Calu3 (cell line): ENCODE measurements at regions of chr5 and their contacts with region 1.

Region 1: GRCh38 chr5:65809817-65810531 is 88.0 kb downstream of the NLN start:
- DNase-seq: peak; percentile 64
- H3K4me3 Mint-ChIP-seq: no peak overlapping the region
- H3K27ac Mint-ChIP-seq: peak overlapping the region; percentile 85
- H3K4me1 Mint-ChIP-seq: peaks cover 64% of the 10 kb centered on the region
- H3K27me3 Mint-ChIP-seq: no peaks in the 10 kb centered on the region
- CTCF ChIP-seq: no peak

Region 2: DNA sequence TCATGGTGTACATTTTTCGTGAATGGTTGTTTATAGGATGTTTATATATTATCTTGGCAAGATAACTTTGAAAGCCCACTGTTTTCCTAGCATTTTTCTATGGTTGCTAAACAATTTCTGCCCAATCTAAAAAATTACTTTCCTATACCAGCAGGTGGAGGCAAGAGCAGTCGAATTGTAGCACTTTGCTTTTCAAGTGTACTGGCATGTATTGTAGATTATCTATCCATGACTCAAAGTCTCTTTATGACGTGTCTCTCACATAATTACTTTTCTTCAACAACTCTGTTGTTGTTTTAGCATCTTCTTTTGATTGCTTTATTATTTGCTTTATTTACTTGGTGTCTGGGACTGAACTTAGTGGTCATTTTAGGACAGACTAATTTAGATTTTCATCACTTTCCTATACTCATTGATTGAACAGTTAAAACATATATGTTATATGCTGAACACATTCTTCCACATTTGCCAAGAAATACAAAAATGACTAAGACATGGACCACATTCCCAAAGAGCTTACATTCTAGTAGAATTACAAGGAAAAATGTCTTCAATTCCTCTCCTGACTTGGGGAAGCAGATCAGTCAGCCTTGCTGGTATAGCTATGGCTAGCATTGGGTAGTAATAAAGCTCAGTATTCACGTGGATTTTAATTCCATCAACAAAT is 67.3 kb before region 1 on chr5:
- CTCF ChIA-PET with region 1: no interaction called
- intact Hi-C with region 1: loop called (anchors 5 kb)
- DNase-seq: peak; percentile 22
- H3K4me3 Mint-ChIP-seq: no peak overlapping the region
- H3K27ac Mint-ChIP-seq: peak overlapping the region; percentile 7
- H3K4me1 Mint-ChIP-seq: peaks cover 26% of the 10 kb centered on the region
- H3K27me3 Mint-ChIP-seq: no peaks in the 10 kb centered on the region
- CTCF ChIP-seq: peak; percentile 69

Region 3: GRCh38 chr5:65760504-65761275 is 49.3 kb before region 1 on chr5:
- CTCF ChIA-PET with region 1: no interaction called
- intact Hi-C with region 1: no loop called
- DNase-seq: peak; percentile 30
- H3K4me3 Mint-ChIP-seq: no peak overlapping the region
- H3K27ac Mint-ChIP-seq: peak overlapping the region; percentile 46
- H3K4me1 Mint-ChIP-seq: no peaks in the 10 kb centered on the region
- H3K27me3 Mint-ChIP-seq: no peaks in the 10 kb centered on the region
- CTCF ChIP-seq: no peak

Region 4: GRCh38 chr5:65774346-65774745 is 35.6 kb before region 1 on chr5:
- CTCF ChIA-PET with region 1: no interaction called
- intact Hi-C with region 1: no loop called
- DNase-seq: peak; percentile 6
- H3K4me3 Mint-ChIP-seq: no peak overlapping the region
- H3K27ac Mint-ChIP-seq: no peak overlapping the region
- H3K4me1 Mint-ChIP-seq: no peaks in the 10 kb centered on the region
- H3K27me3 Mint-ChIP-seq: no peaks in the 10 kb centered on the region
- CTCF ChIP-seq: no peak

Region 5: DNA sequence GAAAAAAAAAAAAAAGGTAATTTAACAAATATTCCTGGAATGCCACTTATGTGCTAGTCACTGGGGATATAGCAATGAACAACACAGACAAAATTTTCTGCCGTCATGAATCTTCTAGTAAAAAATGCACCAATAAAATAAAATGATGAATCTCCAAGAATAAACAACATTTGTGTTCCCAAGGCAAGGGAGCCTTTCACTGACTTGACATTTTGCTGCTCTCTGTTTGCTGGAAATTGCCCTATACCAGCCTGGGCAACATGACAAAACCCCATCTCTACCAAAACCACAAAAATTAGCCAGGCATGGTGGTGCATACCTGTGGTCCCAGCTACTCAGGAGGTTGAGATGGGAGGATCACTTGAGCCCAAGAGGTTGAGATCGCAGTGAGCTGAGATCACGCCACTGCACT is 51.9 kb after region 1 on chr5:
- CTCF ChIA-PET with region 1: interaction called, 3 read pairs
- intact Hi-C with region 1: loop called (anchors 5 kb)
- DNase-seq: peak; percentile 75
- H3K4me3 Mint-ChIP-seq: no peak overlapping the region
- H3K27ac Mint-ChIP-seq: peak overlapping the region; percentile 84
- H3K4me1 Mint-ChIP-seq: peaks cover 50% of the 10 kb centered on the region
- H3K27me3 Mint-ChIP-seq: no peaks in the 10 kb centered on the region
- CTCF ChIP-seq: no peak